A549 (cell line): ENCODE measurements at regions of chr4 and their contacts with region 1.

Region 1: GRCh38 chr4:118981839-118982381 is 93.3 kb downstream of the SYNPO2 start:
- DNase-seq: peak; percentile 50 to 64
- ATAC-seq: peak; percentile 91 to 94
- H3K4me3 ChIP-seq: no peak overlapping the region
- H3K27ac ChIP-seq: no peak overlapping the region
- H3K4me1 ChIP-seq: 0 out of 3 replicates have a peak, but pooled peaks cover 3% of the 10 kb centered on the region
- CTCF ChIP-seq: peak; percentile 74
- EP300 ChIP-seq: no peak
- POLR2A ChIP-seq: no peak
- RAD21 ChIP-seq: peak; percentile 88 to 92

Region 2: GRCh38 chr4:119103263-119103662 is 121.4 kb after region 1 on chr4:
- CTCF ChIA-PET with region 1: no interaction called
- POLR2A ChIA-PET with region 1: no interaction called
- DNase-seq: peak; percentile 69 to 96
- ATAC-seq: peak; percentile 97 to 99
- H3K4me3 ChIP-seq: no peak overlapping the region
- H3K27ac ChIP-seq: peak overlapping the region; percentile 91 to 99
- H3K4me1 ChIP-seq: peaks cover 64% of the 10 kb centered on the region
- CTCF ChIP-seq: no peak
- EP300 ChIP-seq: peak; percentile 66 to 85; a peak in 4 of 5 replicates
- POLR2A ChIP-seq: no peak
- RAD21 ChIP-seq: no peak

Region 3: GRCh38 chr4:119300101-119300978 is 318.4 kb after region 1 on chr4:
- CTCF ChIA-PET with region 1: interaction called, 10 read pairs
- POLR2A ChIA-PET with region 1: no interaction called
- DNase-seq: peak; percentile 66 to 93
- ATAC-seq: peak; percentile 96 to 98
- H3K4me3 ChIP-seq: peak overlapping the region; percentile 89
- H3K27ac ChIP-seq: peak overlapping the region; percentile 88 to 91
- H3K4me1 ChIP-seq: peaks cover 13% of the 10 kb centered on the region; the same call in 2 of the 3 replicates
- CTCF ChIP-seq: no peak
- EP300 ChIP-seq: no peak
- POLR2A ChIP-seq: peak; percentile 12
- RAD21 ChIP-seq: no peak